Psoas muscle (tissue), 8 donors: ENCODE measurements at regions of chr9 and their contacts with region 1.

Region 1: GRCh38 chr9:108078811-108079210 is 589.2 kb upstream of the KLF4 start:
- DNase-seq: no peak
- ATAC-seq: no peak
- H3K4me3 ChIP-seq: no peak overlapping the region
- H3K27ac ChIP-seq: no peak overlapping the region
- H3K4me1 ChIP-seq: no peaks in the 10 kb centered on the region
- H3K27me3 ChIP-seq: no peaks in the 10 kb centered on the region
- CTCF ChIP-seq: no peak

Region 2: GRCh38 chr9:108017671-108018070 is 61.1 kb before region 1 on chr9:
- intact Hi-C with region 1: loop called in 1 of 2 experiments (anchors 10 kb)
- DNase-seq: no peak
- ATAC-seq: no peak
- H3K4me3 ChIP-seq: no peak overlapping the region
- H3K27ac ChIP-seq: no peak overlapping the region
- H3K4me1 ChIP-seq: no peaks in the 10 kb centered on the region
- H3K27me3 ChIP-seq: no peaks in the 10 kb centered on the region
- CTCF ChIP-seq: no peak